ENCODE measurements at regions of chr11 and their contacts with region 1.

Region 1: GRCh38 chr11:74170694-74171629 is at the starts of genes C2CD3 and PPME1:
- DNase-seq: peak; percentile 99
- H3K4me3 Mint-ChIP-seq: no peak within 1 kb of the TSS
- H3K27ac Mint-ChIP-seq: no peak within 1 kb of the TSS
- H3K4me1 Mint-ChIP-seq: peaks cover 17% of the 10 kb centered on the region
- H3K27me3 Mint-ChIP-seq: no peaks in the 10 kb centered on the region
- total RNA-seq, gene C2CD3: 21.3 to 23.1 TPM
- total RNA-seq, gene PPME1: 19.0 to 22.1 TPM

Region 2: GRCh38 chr11:73350908-73351636 is 819.9 kb before region 1 on chr11:
- CTCF ChIA-PET with region 1: no interaction called
- intact Hi-C with region 1: no loop called
- DNase-seq: peak; percentile 73
- H3K4me3 Mint-ChIP-seq: no peak overlapping the region
- H3K27ac Mint-ChIP-seq: peak overlapping the region; percentile 38
- H3K4me1 Mint-ChIP-seq: no peaks in the 10 kb centered on the region
- H3K27me3 Mint-ChIP-seq: no peaks in the 10 kb centered on the region

Region 3: DNA sequence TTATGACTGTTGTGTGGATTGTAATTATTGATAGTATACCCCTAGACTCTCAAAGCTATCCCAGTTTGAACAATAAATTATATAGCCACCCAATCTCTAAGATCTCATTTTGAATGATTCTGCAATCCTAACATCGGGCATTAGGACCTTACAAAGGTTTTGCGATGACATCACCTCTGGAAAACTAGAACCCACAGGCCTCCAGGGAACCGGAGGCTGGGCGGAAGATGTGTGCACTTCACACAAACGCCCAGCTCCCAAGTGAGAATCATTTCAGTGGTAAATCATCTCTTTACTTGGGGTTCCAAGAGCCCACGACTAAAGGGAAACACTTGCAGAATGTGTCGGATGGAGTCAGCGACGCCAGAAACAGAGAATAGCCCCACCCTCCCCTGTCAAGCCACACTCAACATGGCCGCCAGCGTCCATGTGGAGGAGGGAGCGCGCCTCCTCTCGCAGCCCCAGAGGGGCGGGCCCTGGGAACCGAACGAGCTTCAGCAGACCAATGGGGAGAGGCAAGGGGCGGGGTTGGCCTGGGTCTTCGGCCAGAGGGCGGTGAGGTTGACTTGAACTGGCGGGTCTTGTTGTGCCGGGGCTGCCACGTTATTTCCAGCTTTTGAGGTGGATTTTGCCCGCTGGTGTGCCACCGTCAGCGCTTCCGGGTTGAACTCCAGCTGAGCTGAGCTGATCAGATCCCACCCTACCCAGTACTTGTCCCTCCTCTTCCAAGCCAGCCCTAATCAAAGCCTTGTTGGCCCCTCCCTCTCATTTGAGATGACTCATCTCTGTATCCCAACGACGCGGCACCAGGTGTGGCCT is 391.7 kb before region 1 on chr11:
- CTCF ChIA-PET with region 1: no interaction called
- intact Hi-C with region 1: loop called (anchors 1 kb)
- DNase-seq: peak; percentile 99
- H3K4me3 Mint-ChIP-seq: peak overlapping the region; percentile 85
- H3K27ac Mint-ChIP-seq: peak overlapping the region; percentile 98
- H3K4me1 Mint-ChIP-seq: peaks cover 14% of the 10 kb centered on the region
- H3K27me3 Mint-ChIP-seq: no peaks in the 10 kb centered on the region

Region 4: GRCh38 chr11:73876424-73877300 is 294.3 kb before region 1 on chr11 and contains the starts of genes COA4 and PAAF1:
- CTCF ChIA-PET with region 1: no interaction called
- intact Hi-C with region 1: loop called (anchors 1 kb)
- DNase-seq: peak; percentile 97
- H3K4me3 Mint-ChIP-seq: peak within 1 kb of the TSS; percentile 95
- H3K27ac Mint-ChIP-seq: peak within 1 kb of the TSS; percentile 92
- H3K4me1 Mint-ChIP-seq: peaks cover 42% of the 10 kb centered on the region
- H3K27me3 Mint-ChIP-seq: no peaks in the 10 kb centered on the region
- total RNA-seq, gene COA4: 87.8 to 94.2 TPM
- total RNA-seq, gene PAAF1: 29.7 to 30.4 TPM

Region 5: DNA sequence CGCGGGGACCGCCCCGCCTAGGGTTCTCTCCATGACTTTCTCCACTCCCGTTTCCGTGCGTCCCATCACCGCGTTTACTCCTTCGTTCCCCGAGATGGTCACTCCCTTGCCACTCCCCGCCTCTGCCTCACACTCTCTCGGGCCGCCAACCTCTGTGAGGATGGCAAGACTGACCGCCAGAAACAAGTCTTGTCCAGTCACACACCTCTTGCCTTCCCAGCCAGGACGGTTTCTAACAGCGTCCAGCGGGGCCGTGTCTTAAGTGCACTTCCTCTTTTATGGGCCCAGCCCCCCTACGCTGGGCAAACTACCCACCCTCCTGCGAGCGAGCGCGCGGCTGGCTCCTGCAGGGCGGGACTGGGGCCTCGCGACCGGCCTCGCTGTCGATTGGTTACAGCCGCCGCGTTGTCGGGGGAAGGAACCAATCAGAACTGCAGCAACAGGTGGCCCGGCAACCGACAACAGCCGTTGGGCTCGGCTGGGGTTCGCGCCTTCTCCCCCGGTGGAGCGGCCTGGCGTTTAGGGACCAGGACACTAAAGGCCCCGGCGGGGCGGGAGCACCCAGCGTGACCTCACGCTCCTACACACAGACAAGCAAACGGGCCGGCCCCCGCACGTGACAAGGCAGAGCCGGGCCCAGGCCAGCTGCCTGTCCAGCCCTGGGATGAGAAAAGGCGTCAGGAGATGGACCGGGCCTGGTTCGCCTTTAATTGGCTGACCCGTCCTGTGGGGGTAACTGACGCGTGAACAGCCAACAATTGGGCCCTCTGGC is 187.8 kb before region 1 on chr11:
- CTCF ChIA-PET with region 1: no interaction called
- intact Hi-C with region 1: loop called (anchors 1 kb)
- DNase-seq: peak; percentile 96
- H3K4me3 Mint-ChIP-seq: peak overlapping the region; percentile 98
- H3K27ac Mint-ChIP-seq: peak overlapping the region; percentile 99
- H3K4me1 Mint-ChIP-seq: peaks cover 45% of the 10 kb centered on the region
- H3K27me3 Mint-ChIP-seq: no peaks in the 10 kb centered on the region

Region 6: GRCh38 chr11:74203966-74204365 is 33.0 kb after region 1 on chr11:
- CTCF ChIA-PET with region 1: no interaction called
- intact Hi-C with region 1: no loop called
- DNase-seq: no peak
- H3K4me3 Mint-ChIP-seq: no peak overlapping the region
- H3K27ac Mint-ChIP-seq: no peak overlapping the region
- H3K4me1 Mint-ChIP-seq: peaks cover 12% of the 10 kb centered on the region
- H3K27me3 Mint-ChIP-seq: no peaks in the 10 kb centered on the region

Region 7: GRCh38 chr11:74592441-74593362 is 421.7 kb after region 1 on chr11 and contains the start of gene POLD3:
- CTCF ChIA-PET with region 1: no interaction called
- intact Hi-C with region 1: loop called (anchors 1 kb)
- DNase-seq: peak; percentile 98
- H3K4me3 Mint-ChIP-seq: peak within 1 kb of the TSS; percentile 89
- H3K27ac Mint-ChIP-seq: peak within 1 kb of the TSS; percentile 98
- H3K4me1 Mint-ChIP-seq: peaks cover 28% of the 10 kb centered on the region
- H3K27me3 Mint-ChIP-seq: no peaks in the 10 kb centered on the region
- total RNA-seq, gene POLD3: 84.8 to 91.9 TPM